Activated T-helper 2 cell treated with anti-CD3 and anti-CD28 coated beads, Interferon-gamma antibody, Interleukin-2, Interleukin-4, amounts not matched to agents 10 μg/mL and 5 μg/mL and 100 μg/mL, durations not matched to agents 14 hours and 24 hours and 36 hours (primary cell): ENCODE measurements at regions of chr12 and their contacts with region 1.

Region 1: DNA sequence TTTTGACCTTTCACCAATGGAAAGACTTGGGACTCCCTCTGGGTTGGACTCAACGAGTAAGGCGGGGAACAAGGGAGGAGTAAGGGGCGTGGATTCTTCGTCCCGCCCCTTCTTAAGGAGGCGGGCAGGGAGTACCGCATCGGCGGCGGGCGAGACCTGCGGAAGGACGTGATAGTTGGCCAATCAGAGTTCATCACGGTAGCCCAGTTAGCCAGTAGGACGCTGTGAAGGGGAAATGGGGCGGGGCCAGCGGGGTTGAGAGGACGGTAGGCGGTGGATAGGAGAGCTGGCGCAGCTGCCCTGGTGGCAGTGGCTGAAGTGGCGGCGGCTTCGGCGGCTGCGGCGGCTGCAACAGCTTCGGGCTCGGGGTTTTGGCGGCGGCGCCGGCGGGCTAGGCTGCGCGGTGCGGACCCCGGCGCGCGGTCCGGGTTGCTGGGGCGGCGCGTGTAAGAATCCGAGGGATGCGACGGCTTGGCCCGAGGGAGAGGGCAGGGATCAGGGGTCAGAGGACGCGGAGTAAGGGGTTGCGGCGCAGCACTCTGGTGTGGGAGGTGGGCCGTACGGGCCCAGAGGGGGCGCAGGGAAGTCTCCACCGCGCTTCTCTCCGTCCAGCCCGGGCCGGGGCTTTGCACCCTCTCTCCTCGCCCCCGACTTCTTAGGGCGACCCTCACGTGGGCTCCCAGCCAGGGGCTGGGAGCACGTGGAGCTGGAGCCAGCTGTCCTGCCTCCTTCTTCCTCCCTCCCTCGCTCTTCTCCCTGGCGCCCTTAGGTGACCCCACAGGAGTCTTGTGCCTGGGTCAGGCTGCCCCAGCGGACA is at the start of gene TPCN1:
- DNase-seq: peak; percentile 99
- H3K4me3 Mint-ChIP-seq: peak within 1 kb of the TSS; percentile 94
- H3K27ac Mint-ChIP-seq: peak within 1 kb of the TSS; percentile 85
- H3K4me1 Mint-ChIP-seq: peaks cover 32% of the 10 kb centered on the region
- H3K27me3 Mint-ChIP-seq: no peaks in the 10 kb centered on the region
- total RNA-seq, gene TPCN1: 44.9 and 47.5 TPM in 2 replicates

Region 2: DNA sequence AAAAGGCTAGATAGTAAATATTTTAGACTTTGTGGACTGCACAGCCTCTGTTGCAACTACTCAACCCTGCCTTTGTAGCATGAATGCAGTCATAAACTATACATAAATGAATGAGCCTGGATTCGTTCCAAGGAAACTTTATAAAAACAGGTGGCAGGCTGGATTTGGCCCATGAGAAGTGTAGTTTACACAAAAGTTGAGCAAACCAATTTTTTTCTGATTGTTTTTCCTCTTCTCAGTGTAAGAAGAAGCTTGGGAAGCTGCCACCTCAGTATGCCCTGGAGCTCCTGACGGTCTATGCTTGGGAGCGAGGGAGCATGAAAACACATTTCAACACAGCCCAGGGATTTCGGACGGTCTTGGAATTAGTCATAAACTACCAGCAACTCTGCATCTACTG is 305.1 kb before region 1 on chr12:
- intact Hi-C with region 1: no loop called
- DNase-seq: no peak
- H3K4me3 Mint-ChIP-seq: no peak overlapping the region
- H3K27ac Mint-ChIP-seq: no peak overlapping the region
- H3K4me1 Mint-ChIP-seq: peaks cover 10% of the 10 kb centered on the region
- H3K27me3 Mint-ChIP-seq: no peaks in the 10 kb centered on the region

Region 3: GRCh38 chr12:113184900-113185773 is 36.3 kb before region 1 on chr12 and contains the starts of genes DDX54 and RITA1:
- intact Hi-C with region 1: loop called (anchors 1 kb)
- DNase-seq: peak; percentile 88
- H3K4me3 Mint-ChIP-seq: peak within 1 kb of the TSS; percentile 90
- H3K27ac Mint-ChIP-seq: peak within 1 kb of the TSS; percentile 93
- H3K4me1 Mint-ChIP-seq: peaks cover 26% of the 10 kb centered on the region
- H3K27me3 Mint-ChIP-seq: no peaks in the 10 kb centered on the region
- total RNA-seq, gene DDX54: 115 and 118 TPM in 2 replicates
- total RNA-seq, gene RITA1: 26.8 and 27.2 TPM in 2 replicates

Region 4: DNA sequence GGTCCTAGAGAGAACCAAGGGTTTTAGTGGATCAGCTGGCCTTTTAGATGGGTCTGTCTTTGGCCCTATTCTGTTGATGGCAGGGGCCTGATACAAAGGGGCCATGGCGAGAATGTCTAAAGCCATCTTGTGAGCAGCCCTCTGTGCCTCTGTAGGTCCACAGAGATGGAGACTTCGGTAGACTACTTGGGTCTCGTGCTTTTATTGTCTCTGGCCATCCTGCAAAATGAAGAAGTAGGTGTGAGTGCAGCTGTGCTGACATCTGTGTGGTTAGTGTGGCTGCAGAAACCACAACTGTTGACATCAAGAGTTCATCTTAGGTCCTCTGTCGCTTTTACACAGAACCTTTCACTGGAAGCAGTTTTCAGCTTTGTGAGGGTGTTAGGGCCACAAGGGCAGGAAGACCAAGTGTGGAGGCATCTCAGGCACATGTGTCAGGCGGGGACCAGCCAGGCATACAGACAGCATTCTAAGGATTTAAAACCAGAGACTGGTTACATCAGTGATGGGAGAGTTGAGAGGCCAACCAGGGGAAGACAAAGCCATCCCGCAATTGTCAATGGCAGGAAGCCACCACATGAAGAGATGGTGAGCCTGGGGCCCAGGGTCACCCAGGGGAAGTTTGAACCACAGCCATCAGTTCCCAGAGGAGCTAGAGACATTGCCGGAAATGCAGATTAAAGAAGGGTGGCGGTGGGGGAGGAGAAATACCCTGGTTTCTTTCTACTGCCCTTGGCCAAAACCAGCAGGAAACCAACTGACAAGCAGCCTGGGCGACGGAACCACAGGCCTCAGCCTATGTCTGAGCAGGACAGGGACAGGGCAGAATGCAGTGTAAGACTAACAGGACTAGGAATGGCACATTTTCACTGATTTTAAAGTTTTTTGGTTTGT is 13.1 kb before region 1 on chr12:
- intact Hi-C with region 1: loop called (anchors 1 kb)
- DNase-seq: peak; percentile 69
- H3K4me3 Mint-ChIP-seq: peak overlapping the region; percentile 57
- H3K27ac Mint-ChIP-seq: peak overlapping the region; percentile 97
- H3K4me1 Mint-ChIP-seq: peaks cover 58% of the 10 kb centered on the region
- H3K27me3 Mint-ChIP-seq: no peaks in the 10 kb centered on the region

Region 5: DNA sequence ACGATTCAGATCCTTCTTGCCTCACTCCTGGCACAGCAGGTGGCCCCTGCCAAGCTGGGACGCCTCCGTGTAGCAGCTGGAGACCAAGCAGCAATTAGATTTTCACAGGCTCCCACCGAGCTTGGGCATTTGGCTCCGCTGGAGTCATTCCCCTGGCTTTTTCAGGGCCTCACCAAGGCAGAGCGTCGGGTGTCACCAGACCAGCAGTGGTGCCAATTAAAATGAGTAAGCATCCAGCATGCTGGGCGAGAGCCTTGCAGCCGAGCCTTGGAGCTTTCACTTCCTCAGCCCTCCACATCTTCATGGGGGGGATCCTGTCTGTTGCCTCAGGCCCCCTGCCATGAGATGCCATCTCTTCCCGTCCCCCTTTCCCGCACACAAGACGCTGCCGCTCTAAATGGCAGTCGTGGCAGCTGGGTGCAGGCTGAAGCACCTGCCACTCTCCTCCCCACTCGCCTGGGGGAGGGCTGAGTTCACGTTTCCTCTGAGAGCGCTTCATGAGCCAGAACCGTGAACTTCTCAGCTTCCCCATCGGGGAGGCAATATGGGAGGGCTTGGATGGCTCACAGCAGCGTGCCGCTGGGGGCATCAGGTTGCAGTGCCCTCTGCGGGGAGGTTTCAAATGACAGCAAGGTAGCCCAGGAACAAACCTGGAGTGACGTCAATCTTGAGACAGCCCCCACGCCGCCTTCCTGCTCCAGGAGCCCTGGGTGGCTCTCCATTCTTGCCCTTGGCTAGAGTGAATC is 11.6 kb after region 1 on chr12:
- intact Hi-C with region 1: loop called (anchors 1 kb)
- DNase-seq: peak; percentile 50
- H3K4me3 Mint-ChIP-seq: peak overlapping the region; percentile 61
- H3K27ac Mint-ChIP-seq: peak overlapping the region; percentile 84
- H3K4me1 Mint-ChIP-seq: peaks cover 42% of the 10 kb centered on the region
- H3K27me3 Mint-ChIP-seq: no peaks in the 10 kb centered on the region

Region 6: DNA sequence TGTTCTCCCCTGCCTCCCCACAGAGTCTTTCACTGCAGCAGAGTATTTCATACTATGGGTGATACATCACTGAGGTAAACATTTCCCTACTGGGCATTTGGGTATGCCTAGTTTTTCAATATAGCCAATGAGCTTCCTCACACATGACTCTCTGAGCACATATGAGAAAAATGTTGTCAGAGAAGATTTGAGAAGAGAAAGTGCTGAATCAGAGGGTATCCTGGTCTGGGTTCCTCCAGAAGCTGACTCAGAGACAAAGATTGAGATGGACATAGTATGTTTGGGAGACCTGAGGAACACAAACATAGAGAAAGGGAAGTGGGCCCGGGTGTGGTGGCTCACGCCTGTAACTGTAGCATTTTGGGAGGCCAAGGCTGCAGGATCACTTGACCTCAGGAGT is 101.0 kb after region 1 on chr12:
- intact Hi-C with region 1: no loop called
- DNase-seq: no peak
- H3K4me3 Mint-ChIP-seq: no peak overlapping the region
- H3K27ac Mint-ChIP-seq: no peak overlapping the region
- H3K4me1 Mint-ChIP-seq: peaks cover 7% of the 10 kb centered on the region
- H3K27me3 Mint-ChIP-seq: no peaks in the 10 kb centered on the region

Region 7: GRCh38 chr12:113334786-113335540 is 113.6 kb after region 1 on chr12 and contains the start of gene SLC8B1:
- intact Hi-C with region 1: loop called (anchors 2 kb)
- DNase-seq: peak; percentile 77
- H3K4me3 Mint-ChIP-seq: peak within 1 kb of the TSS; percentile 88
- H3K27ac Mint-ChIP-seq: peak within 1 kb of the TSS; percentile 4
- H3K4me1 Mint-ChIP-seq: peaks cover 15% of the 10 kb centered on the region
- H3K27me3 Mint-ChIP-seq: peaks cover 2% of the 10 kb centered on the region
- total RNA-seq, gene SLC8B1: 20.8 and 23.5 TPM in 2 replicates

Region 8: GRCh38 chr12:113358381-113359132 is 137.2 kb after region 1 on chr12 and contains the start of gene PLBD2:
- intact Hi-C with region 1: loop called (anchors 5 kb)
- DNase-seq: peak; percentile 88
- H3K4me3 Mint-ChIP-seq: peak within 1 kb of the TSS; percentile 85
- H3K27ac Mint-ChIP-seq: peak within 1 kb of the TSS; percentile 59
- H3K4me1 Mint-ChIP-seq: peaks cover 12% of the 10 kb centered on the region
- H3K27me3 Mint-ChIP-seq: peaks cover 1% of the 10 kb centered on the region
- total RNA-seq, gene PLBD2: 16.2 and 18.6 TPM in 2 replicates